A549 (cell line): ENCODE measurements at regions of chr12 and their contacts with region 1.

Region 1: DNA sequence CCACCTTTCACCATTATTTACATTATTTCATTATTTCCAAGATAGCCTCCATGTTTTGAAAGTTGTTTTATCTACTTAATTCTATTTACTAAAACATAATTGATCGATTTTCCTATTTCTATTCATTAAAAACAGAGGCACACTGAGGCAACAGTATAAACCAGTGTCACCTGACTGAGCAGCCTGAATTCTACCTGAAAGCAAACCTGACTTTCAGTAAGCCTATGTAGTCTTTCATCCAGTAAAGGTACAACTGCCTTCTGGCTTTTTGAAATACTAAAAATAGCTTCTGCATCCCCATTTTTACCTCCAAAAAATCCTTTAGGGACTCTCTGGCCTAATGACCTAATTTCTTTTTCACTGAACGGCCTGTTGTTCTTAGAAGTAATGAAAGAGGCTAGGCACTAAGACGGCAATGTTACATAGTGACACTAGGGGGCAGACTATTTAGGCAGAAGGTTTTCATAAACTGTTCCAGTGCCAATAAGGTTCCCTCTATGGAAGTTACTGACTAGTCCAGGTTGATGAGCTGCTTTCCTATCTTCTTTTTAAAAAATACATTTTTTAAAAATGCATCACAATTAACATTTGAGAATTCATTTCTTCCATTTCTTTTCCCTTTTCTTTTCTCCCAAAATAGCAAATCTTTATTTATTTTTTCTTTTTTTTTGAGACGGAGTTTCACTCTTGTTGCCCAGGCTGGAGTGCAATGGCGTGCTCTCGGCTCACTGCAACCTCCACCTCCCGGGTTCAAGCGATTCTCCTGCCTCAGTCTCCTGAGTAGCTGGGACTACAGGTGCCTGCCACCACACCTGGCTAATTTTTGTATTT is 17.5 kb downstream of the ANAPC5 start:
- DNase-seq: peak; percentile 75 to 85
- ATAC-seq: peak; percentile 97 to 98
- H3K4me3 ChIP-seq: no peak overlapping the region
- H3K27ac ChIP-seq: no peak overlapping the region
- H3K4me1 ChIP-seq: peaks cover 5% of the 10 kb centered on the region; the same call in 1 of the 3 replicates
- CTCF ChIP-seq: peak; percentile 88
- EP300 ChIP-seq: no peak
- POLR2A ChIP-seq: no peak
- RAD21 ChIP-seq: peak; percentile 55 to 66

Region 2: DNA sequence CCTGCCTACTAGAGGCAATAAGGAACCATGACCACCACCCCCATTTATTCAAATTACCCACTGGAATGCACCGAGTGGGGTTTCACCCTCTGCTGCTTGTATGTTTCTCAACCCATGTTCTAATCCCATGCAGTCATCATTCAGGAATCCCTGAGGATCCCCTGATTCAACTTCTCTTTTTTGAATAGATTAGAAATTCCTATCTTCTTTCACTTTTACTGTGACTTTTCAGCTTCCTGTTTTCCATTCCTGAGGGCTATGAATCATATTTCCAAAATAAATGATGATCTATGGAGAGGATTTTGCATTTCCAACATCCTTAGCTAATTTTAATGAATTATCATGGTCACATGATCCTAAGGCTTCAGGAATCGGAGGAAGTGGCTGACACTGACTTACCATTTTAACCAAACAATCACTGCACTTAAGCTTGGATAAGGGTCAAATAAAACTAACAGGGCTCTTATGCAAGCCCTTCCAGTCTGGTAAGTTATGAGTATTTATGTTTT is 144.2 kb before region 1 on chr12:
- CTCF ChIA-PET with region 1: no interaction called
- POLR2A ChIA-PET with region 1: no interaction called
- DNase-seq: no peak
- ATAC-seq: peak in 1 of 2 experiments; percentile 52; a peak in 2 of 6 replicates
- H3K4me3 ChIP-seq: no peak overlapping the region
- H3K27ac ChIP-seq: no peak overlapping the region
- H3K4me1 ChIP-seq: no peaks in the 10 kb centered on the region
- CTCF ChIP-seq: no peak
- EP300 ChIP-seq: no peak
- POLR2A ChIP-seq: no peak
- RAD21 ChIP-seq: no peak

Region 3: DNA sequence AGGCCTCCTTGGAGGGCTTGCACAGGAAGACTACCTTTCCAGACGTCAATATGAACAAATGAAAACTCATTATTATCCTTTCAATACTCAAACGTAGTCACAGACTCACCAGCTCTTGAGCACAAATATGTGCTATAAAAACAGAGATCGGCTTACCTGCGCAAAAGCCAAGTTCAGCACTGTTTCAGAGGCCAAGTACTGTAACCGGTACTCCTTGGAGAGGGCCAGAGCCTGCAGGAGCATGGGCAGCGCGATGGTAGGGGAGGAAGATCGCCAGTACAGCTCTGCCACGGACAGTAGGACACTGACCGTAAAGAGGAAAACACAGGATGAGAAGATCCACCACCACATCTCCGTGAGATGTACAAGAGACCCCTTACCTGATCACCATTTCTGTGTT is 16.6 kb before region 1 on chr12:
- CTCF ChIA-PET with region 1: interaction called, 40 read pairs
- POLR2A ChIA-PET with region 1: no interaction called
- DNase-seq: no peak
- ATAC-seq: peak in 1 of 2 experiments; percentile 41; a peak in 2 of 6 replicates
- H3K4me3 ChIP-seq: no peak overlapping the region
- H3K27ac ChIP-seq: no peak overlapping the region
- H3K4me1 ChIP-seq: no peaks in the 10 kb centered on the region
- CTCF ChIP-seq: no peak
- EP300 ChIP-seq: no peak
- POLR2A ChIP-seq: no peak
- RAD21 ChIP-seq: no peak

Region 4: GRCh38 chr12:121351820-121352681 is 17.3 kb after region 1 on chr12 and contains the start of gene ANAPC5:
- CTCF ChIA-PET with region 1: interaction called, 84 read pairs
- POLR2A ChIA-PET with region 1: interaction called, 3 read pairs
- DNase-seq: peak; percentile 99 to 100
- ATAC-seq: peak; percentile 99
- H3K4me3 ChIP-seq: peak within 1 kb of the TSS; percentile 67
- H3K27ac ChIP-seq: peak within 1 kb of the TSS; percentile 81 to 91
- H3K4me1 ChIP-seq: peaks cover 11% of the 10 kb centered on the region; the same call in 2 of the 3 replicates
- CTCF ChIP-seq: no peak
- EP300 ChIP-seq: no peak
- POLR2A ChIP-seq: peak; percentile 86
- RAD21 ChIP-seq: no peak
- polyA plus RNA-seq, gene ANAPC5: 213 and 225 TPM in 2 replicates

Region 5: DNA sequence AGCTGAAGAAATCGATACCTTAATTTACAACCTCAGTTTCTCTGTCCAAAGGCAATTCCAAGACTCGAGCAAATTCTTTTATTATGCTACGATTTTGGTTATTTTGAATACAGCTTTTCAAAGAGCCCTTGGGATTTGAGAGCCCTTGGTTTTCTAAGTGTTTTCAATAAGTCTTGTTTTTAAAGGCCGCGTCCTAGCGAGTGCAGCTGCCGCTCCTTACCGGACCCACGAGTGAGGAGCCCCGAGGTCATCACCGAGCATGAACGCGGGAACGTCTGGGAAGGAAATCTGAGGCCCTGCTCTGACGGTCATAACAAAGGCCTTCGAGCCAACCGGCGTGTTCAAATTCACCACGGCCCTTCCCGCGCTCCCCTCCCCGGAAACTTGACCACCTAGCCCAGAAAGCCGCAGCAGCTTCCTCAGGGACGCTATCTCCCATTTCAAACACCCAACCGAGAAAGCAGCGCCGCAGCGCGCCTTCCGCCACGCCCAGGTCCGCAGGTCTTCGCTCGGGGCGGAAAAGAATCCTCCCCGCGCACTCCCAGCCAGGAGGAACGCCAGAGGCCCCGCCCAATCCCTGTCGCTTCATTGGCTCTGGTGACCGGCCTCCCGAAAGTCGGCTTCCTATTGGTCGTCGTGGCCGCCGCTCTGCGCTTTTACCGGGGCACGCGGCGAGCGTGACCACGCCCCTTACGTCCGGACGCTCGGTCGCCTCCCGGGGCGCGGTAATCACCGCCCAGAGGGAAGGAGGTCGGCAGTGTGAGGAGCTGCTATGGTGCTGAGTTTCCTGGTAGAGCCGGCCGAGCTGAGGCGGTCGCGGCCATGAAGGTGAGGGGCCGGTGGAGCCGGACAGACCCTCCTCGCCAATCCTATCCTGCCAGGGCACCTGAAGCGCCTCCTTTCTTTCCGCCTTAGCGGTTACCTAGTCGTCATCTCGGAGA is 64.9 kb after region 1 on chr12 and contains the start of gene RNF34:
- CTCF ChIA-PET with region 1: interaction called, 11 read pairs
- POLR2A ChIA-PET with region 1: no interaction called
- DNase-seq: peak; percentile 93 to 99
- ATAC-seq: peak; percentile 96 to 97
- H3K4me3 ChIP-seq: peak within 1 kb of the TSS; percentile 84
- H3K27ac ChIP-seq: peak within 1 kb of the TSS; percentile 94 to 96
- H3K4me1 ChIP-seq: peaks cover 19% of the 10 kb centered on the region
- CTCF ChIP-seq: no peak
- EP300 ChIP-seq: no peak
- POLR2A ChIP-seq: peak; percentile 98
- RAD21 ChIP-seq: no peak
- polyA plus RNA-seq, gene RNF34: 59.4 and 94.4 TPM in 2 replicates

Region 6: GRCh38 chr12:121432740-121433480 is 98.2 kb after region 1 on chr12:
- CTCF ChIA-PET with region 1: interaction called, 11 read pairs
- POLR2A ChIA-PET with region 1: no interaction called
- DNase-seq: no peak
- ATAC-seq: peak in 1 of 2 experiments; percentile 28; a peak in 3 of 6 replicates
- H3K4me3 ChIP-seq: no peak overlapping the region
- H3K27ac ChIP-seq: no peak overlapping the region
- H3K4me1 ChIP-seq: no peaks in the 10 kb centered on the region
- CTCF ChIP-seq: no peak
- EP300 ChIP-seq: no peak
- POLR2A ChIP-seq: no peak
- RAD21 ChIP-seq: no peak